ENCODE measurements at regions of chr1 and their contacts with region 1.

Region 1: GRCh38 chr1:151443846-151444782 is 15.2 kb downstream of the POGZ start:
- DNase-seq: peak; percentile 48 to 87
- ATAC-seq: peak; percentile 97 to 100 (median 98)
- H3K4me3 ChIP-seq: no peak overlapping the region
- H3K4me3 Mint-ChIP-seq: no peak overlapping the region
- H3K27ac ChIP-seq: no peak overlapping the region
- H3K27ac Mint-ChIP-seq: no peak overlapping the region
- H3K4me1 ChIP-seq: no peaks in the 10 kb centered on the region
- H3K4me1 Mint-ChIP-seq: peaks cover 24 to 25% of the 10 kb centered on the region in 2 donors
- H3K27me3 ChIP-seq: no peaks in the 10 kb centered on the region
- H3K27me3 Mint-ChIP-seq: no peaks in the 10 kb centered on the region
- CTCF ChIP-seq: peak; percentile 82

Region 2: DNA sequence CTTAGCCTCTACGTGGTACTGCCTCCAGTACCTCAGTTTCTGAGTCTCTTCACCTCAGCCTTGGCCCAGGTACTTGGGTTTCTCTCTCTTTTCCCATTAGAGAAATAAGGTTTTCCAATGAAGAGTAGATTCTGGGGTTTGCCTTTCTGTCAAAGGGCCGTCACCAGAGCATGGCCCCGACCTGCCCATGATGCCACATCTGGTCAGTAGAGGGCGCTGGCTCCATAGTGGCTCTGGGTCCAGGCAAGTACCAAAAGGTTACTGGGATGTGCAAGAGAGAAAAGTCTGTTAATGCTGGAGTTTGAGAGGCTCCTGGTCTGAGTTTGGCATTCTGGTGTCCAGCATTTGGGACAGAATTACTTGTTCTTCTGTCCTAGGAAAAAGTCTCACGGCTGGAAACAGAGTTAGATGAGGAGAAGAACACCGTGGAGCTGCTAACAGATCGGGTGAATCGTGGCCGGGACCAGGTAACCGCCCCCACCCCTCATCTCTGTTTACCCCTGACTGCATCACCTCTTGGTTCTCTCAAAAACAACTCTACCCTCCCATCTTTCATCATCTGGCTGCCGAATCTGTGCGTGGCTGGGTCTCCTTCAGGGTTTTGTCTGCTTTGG is 90.7 kb after region 1 on chr1:
- intact Hi-C with region 1: loop called (anchors 5 kb)
- DNase-seq: peak; percentile 66 to 84
- ATAC-seq: peak; percentile 80 to 93 (median 90)
- H3K4me3 ChIP-seq: no peak overlapping the region
- H3K4me3 Mint-ChIP-seq: no peak overlapping the region
- H3K27ac ChIP-seq: no peak overlapping the region
- H3K27ac Mint-ChIP-seq: no peak overlapping the region
- H3K4me1 ChIP-seq: peaks cover 6% of the 10 kb centered on the region
- H3K4me1 Mint-ChIP-seq: peaks cover 0 to 3% of the 10 kb centered on the region in 2 donors
- H3K27me3 ChIP-seq: no peaks in the 10 kb centered on the region
- H3K27me3 Mint-ChIP-seq: no peaks in the 10 kb centered on the region
- CTCF ChIP-seq: peak; percentile 80

Region 3: DNA sequence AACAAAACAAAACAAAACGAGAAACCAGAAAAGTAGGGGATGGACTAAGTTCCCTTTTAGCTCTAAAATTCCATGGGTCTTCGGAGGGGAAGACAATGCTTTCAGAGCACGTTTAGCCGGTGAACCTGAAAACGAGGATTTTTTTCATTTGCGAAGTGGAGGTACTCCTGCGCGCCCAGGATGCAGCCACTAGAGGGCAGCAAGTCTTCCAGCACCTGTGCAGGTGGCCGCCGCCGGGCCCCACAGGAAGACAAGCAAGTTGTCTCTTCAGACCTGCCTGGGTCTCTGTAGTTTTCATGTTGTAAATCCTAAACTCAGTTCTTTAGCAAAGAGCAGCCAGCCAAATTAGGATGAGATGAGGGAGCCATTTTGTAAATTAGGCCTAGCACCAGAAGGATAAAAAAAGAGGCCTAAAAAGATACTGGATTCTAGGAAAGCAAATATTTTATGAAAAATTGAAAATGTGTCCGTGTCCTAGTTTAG is 150.1 kb after region 1 on chr1:
- intact Hi-C with region 1: loop called (anchors 10 kb)
- DNase-seq: peak; percentile 68 to 92
- ATAC-seq: peak; percentile 87 to 99 (median 98)
- H3K4me3 ChIP-seq: no peak overlapping the region
- H3K4me3 Mint-ChIP-seq: peak overlapping the region; percentile 47
- H3K27ac ChIP-seq: no peak overlapping the region
- H3K27ac Mint-ChIP-seq: peak overlapping the region in 1 of 2 donors; percentile 45
- H3K4me1 ChIP-seq: peaks cover 4% of the 10 kb centered on the region
- H3K4me1 Mint-ChIP-seq: peaks cover 7 to 8% of the 10 kb centered on the region in 2 donors
- H3K27me3 ChIP-seq: no peaks in the 10 kb centered on the region
- H3K27me3 Mint-ChIP-seq: peaks cover 11 to 15% of the 10 kb centered on the region in 2 donors
- CTCF ChIP-seq: peak; percentile 95

Region 4: DNA sequence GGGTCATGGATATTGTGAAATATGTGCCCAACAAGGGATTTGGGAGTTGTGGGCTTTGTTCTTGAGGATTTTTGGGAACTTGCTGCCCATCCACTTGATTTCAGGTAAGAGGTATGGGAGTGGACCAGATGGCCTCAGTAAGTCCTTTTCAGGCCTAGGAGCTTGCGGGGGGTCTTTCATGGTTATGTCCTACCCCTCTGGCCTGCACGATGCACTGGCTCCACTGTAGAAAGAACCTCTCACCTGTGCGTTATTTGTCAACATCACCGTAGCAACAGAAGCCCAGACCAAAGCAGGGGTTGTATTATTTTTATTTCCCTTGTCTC is 285.8 kb after region 1 on chr1:
- intact Hi-C with region 1: loop called (anchors 5 kb)
- DNase-seq: no peak
- ATAC-seq: no peak
- H3K4me3 ChIP-seq: no peak overlapping the region
- H3K4me3 Mint-ChIP-seq: no peak overlapping the region
- H3K27ac ChIP-seq: no peak overlapping the region
- H3K27ac Mint-ChIP-seq: no peak overlapping the region
- H3K4me1 ChIP-seq: no peaks in the 10 kb centered on the region
- H3K4me1 Mint-ChIP-seq: no peaks in the 10 kb centered on the region
- H3K27me3 ChIP-seq: peaks cover 2% of the 10 kb centered on the region
- H3K27me3 Mint-ChIP-seq: peaks cover 29 to 41% of the 10 kb centered on the region in 2 donors
- CTCF ChIP-seq: no peak